Adrenal gland (tissue), 19 donors: ENCODE measurements at regions of chr20 and their contacts with region 1.

Region 1: GRCh38 chr20:32031007-32031958 is 20.8 kb upstream of the HCK start:
- DNase-seq: peak; percentile 79 to 90 (median 89)
- H3K4me3 ChIP-seq: peak overlapping the region in 1 of 4 donors; percentile 40
- H3K27ac ChIP-seq: no peak overlapping the region
- H3K4me1 ChIP-seq: no peaks in the 10 kb centered on the region
- H3K27me3 ChIP-seq: peaks cover 4% of the 10 kb centered on the region
- CTCF ChIP-seq: peak; percentile 82 to 95 (median 87)
- POLR2A ChIP-seq: no peak

Region 2: GRCh38 chr20:31822421-31823330 is 208.6 kb before region 1 on chr20:
- intact Hi-C with region 1: loop called (anchors 5 to 10 kb)
- DNase-seq: peak; percentile 76 to 89 (median 81)
- H3K4me3 ChIP-seq: peak overlapping the region in 1 of 4 donors; percentile 3
- H3K27ac ChIP-seq: no peak overlapping the region
- H3K4me1 ChIP-seq: peaks cover 0 to 3% of the 10 kb centered on the region in 2 donors
- H3K27me3 ChIP-seq: no peaks in the 10 kb centered on the region
- CTCF ChIP-seq: peak; percentile 97 to 100 (median 98)
- POLR2A ChIP-seq: no peak

Region 3: DNA sequence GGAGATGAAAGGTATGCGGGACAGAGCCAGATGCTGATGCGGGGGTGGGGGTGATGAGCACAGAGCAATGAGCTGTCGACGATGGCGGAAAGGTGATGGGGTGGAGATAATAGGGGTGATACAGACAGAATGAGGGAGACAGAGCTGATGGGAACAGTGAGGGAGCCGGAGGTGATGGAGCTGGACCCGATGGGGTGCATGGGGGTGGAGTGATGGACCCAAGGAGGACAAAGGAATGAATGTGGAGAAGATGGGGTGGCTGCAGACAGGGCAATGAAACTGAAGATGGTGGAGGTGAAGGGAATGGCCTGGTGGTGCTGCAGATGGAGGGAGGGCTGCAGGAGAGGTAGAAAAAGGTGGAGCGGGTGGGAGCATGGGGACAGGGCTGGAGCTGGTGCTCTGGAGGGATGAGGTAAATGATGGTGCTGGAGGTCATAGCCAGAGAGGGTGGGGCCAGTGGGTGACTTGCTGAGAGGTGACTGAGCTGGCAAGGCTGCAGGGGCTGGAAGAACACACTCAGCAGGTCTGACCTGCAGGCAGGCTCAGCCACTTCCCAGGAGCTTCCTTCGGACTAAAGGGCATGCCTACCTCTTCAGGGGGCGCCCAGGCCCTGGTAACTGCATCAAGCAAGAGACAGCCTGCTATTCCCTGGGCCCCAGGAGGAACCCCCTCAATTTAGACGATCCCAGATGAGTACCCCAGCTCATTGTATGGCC is 179.9 kb before region 1 on chr20:
- intact Hi-C with region 1: loop called (anchors 5 to 10 kb)
- DNase-seq: no peak
- H3K4me3 ChIP-seq: no peak overlapping the region
- H3K27ac ChIP-seq: no peak overlapping the region
- H3K4me1 ChIP-seq: no peaks in the 10 kb centered on the region
- H3K27me3 ChIP-seq: no peaks in the 10 kb centered on the region
- CTCF ChIP-seq: no peak
- POLR2A ChIP-seq: no peak

Region 4: DNA sequence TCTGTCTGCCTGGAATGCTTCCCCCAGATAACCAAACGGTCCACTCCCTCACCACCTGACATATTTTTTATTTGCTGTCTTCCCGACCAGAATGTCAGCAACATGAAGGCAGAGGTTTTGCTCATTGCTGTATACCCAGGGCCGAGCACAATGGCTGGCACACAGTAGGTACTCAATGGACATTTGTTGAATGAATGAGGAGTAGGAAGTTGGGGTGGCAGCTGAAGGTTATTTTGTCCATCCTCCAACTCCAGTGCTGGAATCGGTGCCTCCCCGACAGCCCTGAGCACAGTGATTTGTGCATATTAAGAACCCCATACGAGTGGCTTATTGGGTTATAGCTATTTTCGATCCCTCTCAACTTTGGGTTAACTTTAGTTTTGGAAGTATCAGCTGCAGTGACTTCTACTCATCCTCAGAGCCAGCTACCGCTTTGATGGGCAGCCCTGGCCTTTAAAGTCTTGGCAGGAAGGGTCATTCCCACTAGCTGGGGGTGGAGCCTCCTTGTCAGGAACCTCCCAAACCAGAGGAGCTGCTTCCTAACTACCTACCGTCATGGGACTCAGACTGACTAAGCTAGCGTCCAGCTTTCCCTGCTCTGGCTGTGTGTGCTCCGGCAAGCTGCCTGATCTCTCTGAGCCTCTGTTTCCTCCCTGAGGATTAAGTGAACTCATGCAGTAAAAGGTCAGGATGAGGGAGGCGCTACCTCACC is 171.1 kb before region 1 on chr20:
- intact Hi-C with region 1: loop called in 1 of 2 experiments (anchors 10 kb)
- DNase-seq: peak; percentile 53 to 80 (median 67)
- H3K4me3 ChIP-seq: peak overlapping the region in 1 of 4 donors; percentile 83
- H3K27ac ChIP-seq: peak overlapping the region in 1 of 5 donors; percentile 34
- H3K4me1 ChIP-seq: peaks cover 14 to 20% of the 10 kb centered on the region in 2 donors
- H3K27me3 ChIP-seq: no peaks in the 10 kb centered on the region
- CTCF ChIP-seq: no peak
- POLR2A ChIP-seq: peak in 1 of 2 donors; percentile 54